ENCODE measurements at regions of chr6 and their contacts with region 1.

Region 1: DNA sequence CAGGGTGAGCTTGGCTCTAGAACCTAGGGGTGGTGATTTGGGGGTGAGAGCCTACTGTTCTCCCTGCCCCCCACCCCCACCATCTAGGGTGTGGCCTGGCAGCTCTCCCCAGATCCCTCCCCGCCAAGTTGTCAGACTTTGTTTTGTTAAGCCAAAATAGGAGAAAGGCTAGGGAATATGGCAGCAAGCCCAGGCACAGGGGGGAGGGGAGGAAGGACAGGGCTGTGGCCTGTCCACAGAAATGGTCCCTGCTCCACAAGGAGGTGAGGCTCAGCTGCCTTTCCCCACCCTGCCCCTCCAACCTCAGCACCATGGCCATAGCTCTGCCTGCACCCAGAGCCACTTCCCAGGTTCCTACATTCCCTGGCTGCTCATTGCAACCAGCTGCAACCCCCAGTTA is 17.2 kb downstream of the SCUBE3 start:
- DNase-seq: no peak
- H3K4me3 ChIP-seq: no peak overlapping the region
- H3K27ac ChIP-seq: no peak overlapping the region
- H3K4me1 ChIP-seq: no peaks in the 10 kb centered on the region
- H3K27me3 ChIP-seq: no peaks in the 10 kb centered on the region
- CTCF ChIP-seq: no peak
- POLR2A ChIP-seq: no peak

Region 2: GRCh38 chr6:35165630-35166071 is 65.3 kb before region 1 on chr6:
- intact Hi-C with region 1: no loop called
- DNase-seq: no peak
- H3K4me3 ChIP-seq: no peak overlapping the region
- H3K27ac ChIP-seq: peak overlapping the region; percentile 46 to 75
- H3K4me1 ChIP-seq: no peaks in the 10 kb centered on the region
- H3K27me3 ChIP-seq: no peaks in the 10 kb centered on the region
- CTCF ChIP-seq: no peak
- POLR2A ChIP-seq: no peak

Region 3: DNA sequence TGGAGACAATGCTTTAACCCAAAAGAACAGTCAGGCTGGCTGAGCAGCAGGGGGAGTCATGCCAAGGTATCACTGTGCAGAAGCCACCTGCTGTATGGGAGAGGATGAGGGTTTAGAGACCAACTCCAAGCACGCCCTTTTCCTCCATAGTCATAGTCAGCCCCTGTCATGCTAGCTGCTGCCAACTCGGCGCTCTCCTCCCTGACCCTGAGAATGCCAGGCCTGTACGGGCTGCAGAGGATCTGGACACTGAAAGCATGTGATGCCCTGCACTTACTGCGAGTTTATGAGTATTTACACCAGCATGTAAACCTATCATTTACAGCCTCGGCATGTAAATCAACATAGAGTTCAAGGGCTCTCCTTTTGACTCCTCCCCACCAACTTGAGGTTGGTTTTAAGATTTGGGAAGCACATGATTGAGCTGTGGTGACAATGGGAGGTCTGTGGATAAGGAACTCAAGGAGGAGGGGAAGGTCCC is 28.8 kb before region 1 on chr6:
- intact Hi-C with region 1: loop called (anchors 2 kb)
- DNase-seq: no peak
- H3K4me3 ChIP-seq: no peak overlapping the region
- H3K27ac ChIP-seq: no peak overlapping the region
- H3K4me1 ChIP-seq: peaks cover 0 to 4% of the 10 kb centered on the region in 2 donors
- H3K27me3 ChIP-seq: no peaks in the 10 kb centered on the region
- CTCF ChIP-seq: no peak
- POLR2A ChIP-seq: no peak

Region 4: DNA sequence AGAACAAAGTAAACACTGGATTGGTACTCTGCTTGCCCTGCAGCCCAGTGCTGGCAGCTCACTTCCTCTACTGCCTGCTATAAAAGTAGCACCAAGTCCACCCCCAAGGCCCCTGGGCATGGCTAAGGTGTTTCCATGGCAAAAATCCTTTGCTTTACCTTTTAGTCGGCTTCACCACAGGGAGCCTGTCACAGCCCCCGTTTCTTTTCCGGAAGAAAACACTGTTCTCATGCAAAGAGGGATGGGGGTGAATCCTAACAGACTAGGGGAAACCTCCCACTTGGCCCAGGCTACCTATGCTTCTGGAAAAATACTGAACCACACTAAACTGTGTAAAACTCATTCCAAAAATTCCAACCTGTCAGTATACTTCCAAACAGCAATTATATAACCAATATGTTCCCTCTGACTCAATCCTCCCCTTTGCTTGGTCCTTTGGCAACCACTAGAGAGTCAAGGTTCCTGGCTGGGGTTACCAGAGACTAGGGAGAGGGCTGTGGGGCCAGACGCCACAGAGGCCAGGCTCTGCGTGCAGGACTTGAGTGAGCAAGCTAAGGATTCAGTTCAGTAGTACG is 1627.5 kb after region 1 on chr6:
- intact Hi-C with region 1: no loop called
- DNase-seq: peak in 1 of 2 donors; percentile 50
- H3K4me3 ChIP-seq: peak overlapping the region in 2 of 3 donors; percentile 20 to 26
- H3K27ac ChIP-seq: peak overlapping the region; percentile 70 to 78
- H3K4me1 ChIP-seq: no peaks in the 10 kb centered on the region
- H3K27me3 ChIP-seq: no peaks in the 10 kb centered on the region
- CTCF ChIP-seq: no peak
- POLR2A ChIP-seq: no peak